Endothelial cell of umbilical vein (primary cell): ENCODE measurements at regions of chr11 and their contacts with region 1.

Region 1: DNA sequence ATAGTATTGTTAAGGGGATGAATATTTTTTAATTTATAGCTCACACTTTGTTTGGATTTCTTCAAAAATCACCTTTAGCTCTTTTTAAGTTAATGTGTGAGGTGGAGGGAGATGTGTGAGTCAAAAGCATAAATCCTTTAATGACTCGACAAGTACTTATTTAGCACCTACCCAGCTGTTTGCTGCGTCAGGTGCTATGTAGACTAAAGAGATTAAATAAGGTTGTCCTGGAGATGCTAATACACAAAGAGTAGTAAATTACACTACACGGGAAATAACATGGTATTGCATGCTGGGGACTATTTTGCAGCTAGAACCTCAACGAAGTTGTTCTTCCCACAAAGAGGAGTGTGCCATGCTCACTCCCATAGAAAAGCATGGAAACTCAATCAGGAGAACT is 583.3 kb upstream of the TENM4 start:
- DNase-seq: no peak
- H3K4me3 ChIP-seq: no peak overlapping the region
- H3K27ac ChIP-seq: no peak overlapping the region
- H3K4me1 ChIP-seq: no peaks in the 10 kb centered on the region
- H3K27me3 ChIP-seq: no peaks in the 10 kb centered on the region
- CTCF ChIP-seq: no peak
- POLR2A ChIP-seq: no peak

Region 2: GRCh38 chr11:80515097-80515496 is 491.0 kb after region 1 on chr11:
- CTCF ChIA-PET with region 1: no interaction called
- POLR2A ChIA-PET with region 1: no interaction called
- dilution Hi-C with region 1: no loop called
- intact Hi-C with region 1: no loop called
- DNase-seq: no peak
- H3K4me3 ChIP-seq: no peak overlapping the region
- H3K27ac ChIP-seq: no peak overlapping the region
- H3K4me1 ChIP-seq: no peaks in the 10 kb centered on the region
- H3K27me3 ChIP-seq: no peaks in the 10 kb centered on the region
- CTCF ChIP-seq: no peak
- POLR2A ChIP-seq: no peak

Region 3: DNA sequence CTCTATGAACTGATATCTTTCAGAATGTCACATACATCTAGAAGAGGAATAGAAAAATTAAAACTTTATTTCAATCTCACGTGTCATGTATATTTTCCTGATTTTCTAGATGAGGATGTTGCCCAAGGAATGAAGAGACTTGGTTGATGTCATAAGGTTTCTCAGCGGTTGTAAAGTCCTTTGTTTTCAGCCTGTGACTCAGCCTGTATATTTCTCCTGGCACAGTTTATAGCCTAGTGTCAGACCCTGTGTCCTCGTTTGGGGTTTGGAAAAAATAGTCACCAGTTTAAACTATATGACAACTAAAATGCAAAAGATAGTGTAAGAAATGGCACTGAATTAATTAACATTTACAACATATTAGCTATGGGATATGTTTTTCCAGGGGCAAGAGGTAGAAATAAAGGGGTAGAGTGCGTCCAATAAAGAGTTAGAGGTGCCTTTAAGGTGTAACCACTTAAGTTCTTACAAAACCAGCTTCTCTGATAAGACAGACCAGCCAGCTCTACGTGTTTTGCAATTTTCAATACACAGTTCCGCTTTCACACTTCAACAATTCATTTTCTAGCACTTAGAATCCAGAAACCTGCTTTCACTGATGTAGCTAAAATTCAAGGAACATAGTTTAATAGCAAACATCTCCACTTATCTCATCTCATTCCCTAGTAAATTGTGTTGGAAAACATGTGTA is 849.3 kb after region 1 on chr11:
- CTCF ChIA-PET with region 1: no interaction called
- POLR2A ChIA-PET with region 1: no interaction called
- dilution Hi-C with region 1: no loop called
- intact Hi-C with region 1: no loop called
- DNase-seq: peak; percentile 66
- H3K4me3 ChIP-seq: no peak overlapping the region
- H3K27ac ChIP-seq: no peak overlapping the region
- H3K4me1 ChIP-seq: peaks cover 21% of the 10 kb centered on the region
- H3K27me3 ChIP-seq: no peaks in the 10 kb centered on the region
- CTCF ChIP-seq: no peak
- POLR2A ChIP-seq: no peak

Region 4: DNA sequence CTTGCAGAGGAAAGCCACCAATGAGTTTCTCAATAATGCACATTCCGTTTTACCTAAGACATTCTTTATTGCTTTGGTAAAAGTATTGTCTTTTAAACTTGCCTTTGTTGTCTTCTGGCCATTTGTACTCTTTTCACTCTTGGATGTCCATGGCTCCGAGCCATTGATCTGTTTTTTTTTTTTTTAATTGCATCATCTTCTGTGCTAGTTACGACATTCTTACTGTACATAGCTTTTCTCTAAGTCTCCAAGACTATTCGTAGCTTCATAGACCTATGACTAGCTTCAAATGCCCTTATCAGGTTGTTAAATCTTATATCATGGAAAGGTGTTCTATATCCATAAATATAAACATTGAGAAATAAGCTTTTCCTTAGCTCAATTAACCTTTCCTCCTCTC is 1186.9 kb after region 1 on chr11:
- CTCF ChIA-PET with region 1: no interaction called
- POLR2A ChIA-PET with region 1: no interaction called
- dilution Hi-C with region 1: no loop called
- intact Hi-C with region 1: loop called (anchors 5 kb)
- DNase-seq: no peak
- H3K4me3 ChIP-seq: no peak overlapping the region
- H3K27ac ChIP-seq: no peak overlapping the region
- H3K4me1 ChIP-seq: no peaks in the 10 kb centered on the region
- H3K27me3 ChIP-seq: no peaks in the 10 kb centered on the region
- CTCF ChIP-seq: no peak
- POLR2A ChIP-seq: no peak